Activated T-helper 1 cell treated with anti-CD3 and anti-CD28 coated beads, Interleukin-12 subunit alpha, Interleukin-12 subunit beta, Interleukin-2, Interleukin-4 antibody, amounts not matched to agents 30 ng/mL and 10 ng/mL and 1 ng/mL, durations not matched to agents 14 hours and 24 hours and 36 hours (primary cell): ENCODE measurements at regions of chr19 and their contacts with region 1.

Region 1: GRCh38 chr19:10653715-10654492 is at the start of gene ILF3:
- DNase-seq: peak; percentile 100
- H3K4me3 Mint-ChIP-seq: peak within 1 kb of the TSS; percentile 92
- H3K27ac Mint-ChIP-seq: peak within 1 kb of the TSS; percentile 96
- H3K4me1 Mint-ChIP-seq: peaks cover 29% of the 10 kb centered on the region
- H3K27me3 Mint-ChIP-seq: peaks cover 6% of the 10 kb centered on the region
- total RNA-seq, gene ILF3: 536 and 558 TPM in 2 replicates

Region 2: GRCh38 chr19:10332955-10333757 is 320.7 kb before region 1 on chr19 and contains the start of gene RAVER1:
- intact Hi-C with region 1: loop called (anchors 5 kb)
- DNase-seq: peak; percentile 95
- H3K4me3 Mint-ChIP-seq: peak within 1 kb of the TSS; percentile 90
- H3K27ac Mint-ChIP-seq: peak within 1 kb of the TSS; percentile 95
- H3K4me1 Mint-ChIP-seq: peaks cover 11% of the 10 kb centered on the region
- H3K27me3 Mint-ChIP-seq: no peaks in the 10 kb centered on the region
- total RNA-seq, gene RAVER1: 92.5 and 92.8 TPM in 2 replicates

Region 3: DNA sequence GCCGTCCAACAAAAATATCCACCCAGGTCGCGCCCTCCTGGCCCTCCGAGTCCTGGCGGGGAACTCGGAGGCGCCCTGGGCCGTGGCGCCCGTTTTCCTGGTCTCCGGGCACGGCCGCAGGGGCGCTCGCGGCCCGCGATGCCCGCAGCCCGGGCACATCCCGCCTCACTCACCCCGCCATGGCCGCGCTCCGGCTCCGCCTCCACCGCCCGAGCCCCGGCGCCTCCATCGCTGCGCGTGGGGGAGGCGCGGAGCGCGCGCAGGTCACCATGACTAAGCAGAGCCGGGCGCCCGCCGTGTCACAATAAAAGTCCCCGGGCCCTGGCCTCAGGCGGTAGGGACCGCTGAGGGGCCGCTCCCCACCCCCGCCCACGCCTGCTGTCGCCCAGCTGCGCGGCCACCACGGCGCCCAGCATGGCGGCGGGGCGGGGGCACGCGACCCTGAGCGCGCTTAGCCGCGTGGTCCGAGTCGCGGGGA is 151.3 kb before region 1 on chr19:
- intact Hi-C with region 1: loop called (anchors 1 kb)
- DNase-seq: peak; percentile 92
- H3K4me3 Mint-ChIP-seq: peak overlapping the region; percentile 94
- H3K27ac Mint-ChIP-seq: peak overlapping the region; percentile 88
- H3K4me1 Mint-ChIP-seq: peaks cover 31% of the 10 kb centered on the region
- H3K27me3 Mint-ChIP-seq: no peaks in the 10 kb centered on the region

Region 4: GRCh38 chr19:10701955-10702525 is 48.1 kb after region 1 on chr19:
- intact Hi-C with region 1: loop called (anchors 1 kb)
- DNase-seq: no peak
- H3K4me3 Mint-ChIP-seq: peak overlapping the region; percentile 90
- H3K27ac Mint-ChIP-seq: peak overlapping the region; percentile 72
- H3K4me1 Mint-ChIP-seq: peaks cover 13% of the 10 kb centered on the region
- H3K27me3 Mint-ChIP-seq: peaks cover 1% of the 10 kb centered on the region

Region 5: GRCh38 chr19:10835754-10836477 is 182.0 kb after region 1 on chr19 and contains the start of gene TMED1:
- intact Hi-C with region 1: loop called (anchors 1 kb)
- DNase-seq: peak; percentile 93
- H3K4me3 Mint-ChIP-seq: peak within 1 kb of the TSS; percentile 92
- H3K27ac Mint-ChIP-seq: peak within 1 kb of the TSS; percentile 99
- H3K4me1 Mint-ChIP-seq: peaks cover 15% of the 10 kb centered on the region
- H3K27me3 Mint-ChIP-seq: peaks cover 4% of the 10 kb centered on the region
- total RNA-seq, gene TMED1: 19.8 and 21.0 TPM in 2 replicates